Heart right ventricle (tissue), 16 donors: ENCODE measurements at regions of chr3 and their contacts with region 1.

Region 1: GRCh38 chr3:119741657-119742590 is 39.1 kb downstream of the CFAP91 start:
- DNase-seq: no peak
- ATAC-seq: peak in 1 of 8 donors; percentile 58
- H3K4me3 ChIP-seq: no peak overlapping the region
- H3K27ac ChIP-seq: peak overlapping the region in 1 of 10 donors; percentile 21
- H3K4me1 ChIP-seq: peaks cover 0 to 9% (median 0%) of the 10 kb centered on the region in 9 donors
- H3K27me3 ChIP-seq: no peaks in the 10 kb centered on the region
- CTCF ChIP-seq: no peak

Region 2: DNA sequence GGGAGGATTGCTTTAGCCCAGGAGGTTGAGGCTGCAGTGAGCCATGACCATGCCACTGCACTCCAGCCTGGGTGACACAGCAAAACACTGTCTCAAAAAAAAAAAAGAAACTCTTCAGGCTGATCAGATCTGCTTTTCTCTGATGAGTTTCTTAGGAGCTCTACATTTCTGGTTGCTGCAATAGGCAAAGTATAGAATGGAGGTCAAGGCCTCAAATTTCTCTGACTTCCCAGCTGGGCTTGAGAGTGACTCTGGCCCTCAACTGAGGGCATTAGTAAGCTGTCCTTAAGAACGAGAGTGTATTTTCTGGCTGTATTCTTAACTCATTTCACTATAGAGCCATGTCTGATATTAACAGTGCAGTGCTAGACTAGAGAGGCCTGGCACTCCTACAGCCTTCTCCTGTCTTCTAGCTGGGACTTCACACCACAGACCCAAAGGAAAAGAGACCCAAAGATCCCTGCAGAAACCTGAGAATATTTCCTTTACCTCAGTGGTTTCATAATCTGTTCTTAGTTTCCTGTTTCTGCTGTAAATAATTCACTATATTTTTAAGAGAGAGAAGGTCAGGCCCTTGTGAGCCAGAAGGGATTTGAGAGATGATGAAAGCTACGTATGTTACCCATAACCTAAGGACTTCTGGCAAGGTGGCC is 37.9 kb after region 1 on chr3:
- intact Hi-C with region 1: loop called in 1 of 10 experiments (anchors 5 kb)
- DNase-seq: no peak
- ATAC-seq: no peak
- H3K4me3 ChIP-seq: no peak overlapping the region
- H3K27ac ChIP-seq: no peak overlapping the region
- H3K4me1 ChIP-seq: peaks cover 0 to 8% (median 0%) of the 10 kb centered on the region in 9 donors
- H3K27me3 ChIP-seq: no peaks in the 10 kb centered on the region
- CTCF ChIP-seq: no peak

Region 3: DNA sequence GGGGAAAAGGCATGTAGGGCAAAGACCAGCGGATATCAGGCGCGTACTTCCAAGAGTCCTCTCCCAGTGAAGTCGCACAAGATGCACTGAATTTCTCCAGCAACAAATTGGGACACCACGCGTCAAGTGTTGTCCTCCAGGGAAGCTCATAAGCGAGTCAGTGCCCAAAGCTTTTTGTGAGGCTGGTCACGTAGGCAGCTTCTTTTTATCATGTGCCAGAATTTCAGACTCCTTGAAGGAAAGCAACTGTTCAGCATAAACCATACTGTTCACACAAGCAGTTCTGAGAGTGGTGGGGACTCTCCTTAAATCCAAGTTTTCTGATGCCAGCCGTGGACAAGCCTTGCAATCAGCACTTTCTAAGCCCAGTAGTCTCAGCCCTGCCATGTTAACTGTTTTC is 718.9 kb after region 1 on chr3:
- intact Hi-C with region 1: no loop called
- DNase-seq: no peak
- ATAC-seq: no peak
- H3K4me3 ChIP-seq: no peak overlapping the region
- H3K27ac ChIP-seq: no peak overlapping the region
- H3K4me1 ChIP-seq: peaks cover 0 to 25% (median 18%) of the 10 kb centered on the region in 9 donors
- H3K27me3 ChIP-seq: no peaks in the 10 kb centered on the region
- CTCF ChIP-seq: no peak